HCT116 (cell line): ENCODE measurements at regions of chr17 and their contacts with region 1.

Region 1: GRCh38 chr17:19766422-19767270 is 18.5 kb upstream of the ALDH3A1 start:
- DNase-seq: peak; percentile 41
- ATAC-seq: peak; percentile 96
- H3K4me3 ChIP-seq: no peak overlapping the region
- H3K27ac ChIP-seq: no peak overlapping the region
- H3K4me1 ChIP-seq: peaks cover 0 to 10% of the 10 kb centered on the region in 2 experiments; a peak in 1 of 4 replicates
- H3K27me3 ChIP-seq: no peaks in the 10 kb centered on the region
- CTCF ChIP-seq: peak; percentile 94 to 99 (median 99)
- POLR2A ChIP-seq: no peak
- RAD21 ChIP-seq: peak; percentile 99

Region 2: GRCh38 chr17:19377602-19378392 is 388.8 kb before region 1 on chr17:
- CTCF ChIA-PET with region 1: interaction called, 10 read pairs
- POLR2A ChIA-PET with region 1: interaction called, 4 read pairs
- RAD21 ChIA-PET with region 1: no interaction called
- intact Hi-C with region 1: no loop called
- DNase-seq: peak; percentile 96
- ATAC-seq: peak; percentile 92
- H3K4me3 ChIP-seq: peak overlapping the region; percentile 67 to 94
- H3K27ac ChIP-seq: peak overlapping the region; percentile 84
- H3K4me1 ChIP-seq: peaks cover 9 to 18% of the 10 kb centered on the region in 2 experiments; a peak in 3 of 4 replicates
- H3K27me3 ChIP-seq: no peaks in the 10 kb centered on the region
- CTCF ChIP-seq: no peak
- POLR2A ChIP-seq: peak; percentile 83
- RAD21 ChIP-seq: no peak

Region 3: DNA sequence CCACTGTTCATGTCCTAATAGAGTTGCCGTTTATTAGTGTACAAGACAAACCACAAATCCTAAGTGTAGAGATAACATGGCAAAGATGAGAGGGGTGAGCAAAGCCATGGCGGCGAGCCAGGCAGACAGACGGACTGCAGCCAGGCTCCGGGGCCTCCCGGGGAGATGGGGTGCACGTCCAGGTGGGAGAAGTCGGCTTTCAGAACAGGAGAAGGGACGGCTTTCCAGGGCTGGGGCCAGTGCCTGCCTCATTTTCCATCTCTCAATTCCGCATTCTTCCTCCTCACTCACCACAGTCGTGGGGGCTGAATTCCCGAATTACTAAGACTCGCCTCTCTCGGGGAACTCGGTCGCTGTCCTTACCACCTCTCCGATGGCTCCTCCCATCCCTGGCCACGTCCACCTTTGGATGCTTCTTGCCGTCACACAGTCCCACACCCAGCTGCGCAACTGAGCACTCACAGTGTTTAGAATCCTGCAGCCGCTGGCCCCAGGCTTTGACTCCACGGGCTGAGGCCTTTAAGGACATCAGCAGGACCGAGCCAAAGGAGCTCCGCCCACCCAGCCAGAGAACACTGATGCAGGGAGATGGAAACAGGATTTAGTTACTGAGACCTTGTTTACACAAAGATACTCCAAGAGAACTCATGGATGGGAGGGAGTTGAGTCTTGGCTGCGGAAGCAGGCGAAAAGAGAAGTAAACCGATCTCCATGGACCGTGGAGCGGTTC is 295.9 kb before region 1 on chr17:
- CTCF ChIA-PET with region 1: interaction called, 4 read pairs
- POLR2A ChIA-PET with region 1: no interaction called
- RAD21 ChIA-PET with region 1: no interaction called
- intact Hi-C with region 1: loop called (anchors 2 kb)
- DNase-seq: no peak
- ATAC-seq: no peak
- H3K4me3 ChIP-seq: no peak overlapping the region
- H3K27ac ChIP-seq: no peak overlapping the region
- H3K4me1 ChIP-seq: no peaks in the 10 kb centered on the region
- H3K27me3 ChIP-seq: no peaks in the 10 kb centered on the region
- CTCF ChIP-seq: no peak
- POLR2A ChIP-seq: no peak
- RAD21 ChIP-seq: no peak

Region 4: GRCh38 chr17:19648475-19649406 is 117.9 kb before region 1 on chr17 and contains the start of gene ALDH3A2:
- CTCF ChIA-PET with region 1: interaction called, 11 read pairs
- POLR2A ChIA-PET with region 1: interaction called, 4 read pairs
- RAD21 ChIA-PET with region 1: interaction called, 3 to 4 read pairs
- intact Hi-C with region 1: no loop called
- DNase-seq: peak; percentile 85
- ATAC-seq: peak; percentile 85
- H3K4me3 ChIP-seq: peak within 1 kb of the TSS; percentile 52 to 69
- H3K27ac ChIP-seq: peak within 1 kb of the TSS; percentile 99
- H3K4me1 ChIP-seq: peaks cover 53 to 73% of the 10 kb centered on the region in 2 experiments
- H3K27me3 ChIP-seq: no peaks in the 10 kb centered on the region
- CTCF ChIP-seq: peak in 1 of 3 experiments; percentile 17; a peak in 1 of 6 replicates
- POLR2A ChIP-seq: peak; percentile 77
- RAD21 ChIP-seq: peak; percentile 39
- total RNA-seq, gene ALDH3A2: 86.8 TPM

Region 5: DNA sequence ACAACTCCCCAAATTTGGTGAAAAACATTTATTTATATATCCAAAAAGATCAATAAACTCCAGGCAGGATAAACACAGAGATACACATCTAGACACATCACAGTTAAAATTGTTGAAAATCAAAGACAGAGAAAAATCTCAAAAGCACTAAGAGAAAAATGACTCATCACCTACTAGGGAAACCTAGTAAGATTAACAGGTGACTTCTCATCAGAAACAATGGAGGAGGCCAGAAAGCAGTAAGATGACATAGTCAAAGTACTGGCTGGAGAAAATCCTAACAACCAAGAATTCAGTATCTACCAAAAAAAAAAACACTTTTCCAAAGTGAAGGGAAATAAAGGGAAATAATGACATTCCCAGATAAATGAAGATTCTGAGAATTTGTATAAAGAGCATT is 67.3 kb after region 1 on chr17:
- CTCF ChIA-PET with region 1: interaction called, 3 read pairs
- POLR2A ChIA-PET with region 1: no interaction called
- RAD21 ChIA-PET with region 1: no interaction called
- intact Hi-C with region 1: loop called (anchors 10 kb)
- DNase-seq: no peak
- ATAC-seq: no peak
- H3K4me3 ChIP-seq: no peak overlapping the region
- H3K27ac ChIP-seq: no peak overlapping the region
- H3K4me1 ChIP-seq: no peaks in the 10 kb centered on the region
- H3K27me3 ChIP-seq: no peaks in the 10 kb centered on the region
- CTCF ChIP-seq: no peak
- POLR2A ChIP-seq: no peak
- RAD21 ChIP-seq: no peak

Region 6: GRCh38 chr17:20159406-20160075 is 392.9 kb after region 1 on chr17:
- CTCF ChIA-PET with region 1: no interaction called
- POLR2A ChIA-PET with region 1: no interaction called
- RAD21 ChIA-PET with region 1: no interaction called
- intact Hi-C with region 1: no loop called
- DNase-seq: no peak
- ATAC-seq: no peak
- H3K4me3 ChIP-seq: no peak overlapping the region
- H3K27ac ChIP-seq: no peak overlapping the region
- H3K4me1 ChIP-seq: peaks cover 12 to 15% of the 10 kb centered on the region in 2 experiments
- H3K27me3 ChIP-seq: no peaks in the 10 kb centered on the region
- CTCF ChIP-seq: no peak
- POLR2A ChIP-seq: no peak
- RAD21 ChIP-seq: no peak